ENCODE measurements at regions of chr2 and their contacts with region 1.

Region 1: DNA sequence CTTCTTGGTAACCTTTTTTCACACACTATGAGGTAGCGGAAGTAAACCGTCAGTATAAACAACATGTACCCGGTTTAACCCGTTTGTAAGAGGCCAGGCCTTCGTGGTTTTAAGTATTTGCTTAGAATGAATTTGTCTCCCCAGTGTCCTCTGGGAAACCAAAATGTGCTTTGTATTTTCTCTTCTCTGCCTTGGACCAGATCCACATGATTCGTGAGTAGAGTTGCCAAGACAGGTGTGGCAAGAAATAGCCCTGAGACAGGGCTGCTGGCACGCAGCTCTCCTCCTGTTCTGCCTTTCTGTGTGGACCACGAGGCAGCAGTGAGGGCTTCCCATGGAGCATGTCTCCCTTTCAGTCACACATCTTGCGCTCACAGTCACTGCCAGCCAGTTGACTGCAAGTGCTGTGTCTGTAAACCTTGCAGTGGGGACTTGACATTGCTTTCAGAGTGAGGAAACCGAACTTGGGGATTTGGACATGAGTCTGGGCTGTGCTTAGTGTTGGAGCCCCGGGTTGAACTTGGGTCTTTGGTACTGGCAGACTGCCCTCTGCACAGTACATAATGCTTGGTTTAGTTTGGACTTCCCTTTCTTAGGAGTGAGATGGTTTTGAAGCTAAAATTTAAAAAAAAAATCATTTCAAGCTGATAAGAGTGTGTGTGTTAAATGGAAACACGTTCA is 19.1 kb downstream of the BCL2L11 start:
- DNase-seq: peak; percentile 34
- H3K4me3 ChIP-seq: no peak overlapping the region
- CTCF ChIP-seq: no peak

Region 2: GRCh38 chr2:111071600-111072171 is 68.1 kb before region 1 on chr2:
- in situ Hi-C with region 1: no loop called
- DNase-seq: peak; percentile 70
- H3K4me3 ChIP-seq: no peak overlapping the region
- CTCF ChIP-seq: no peak

Region 3: GRCh38 chr2:111094691-111095090 is 45.1 kb before region 1 on chr2:
- in situ Hi-C with region 1: loop called (anchors 5 kb)
- DNase-seq: no peak
- H3K4me3 ChIP-seq: no peak overlapping the region
- CTCF ChIP-seq: no peak